Activated CD4-positive, alpha-beta T cell treated with anti-CD3 and anti-CD28 coated beads, Interleukin-2, amount 10 ng/mL, durations not matched to agents 24 days and 14 days (primary cell): ENCODE measurements at regions of chr9 and their contacts with region 1.

Region 1: GRCh38 chr9:27033823-27034403 is 28.4 kb upstream of the LRRC19 start:
- DNase-seq: peak; percentile 83
- H3K4me3 Mint-ChIP-seq: no peak overlapping the region
- H3K27ac Mint-ChIP-seq: no peak overlapping the region
- H3K4me1 Mint-ChIP-seq: no peaks in the 10 kb centered on the region
- H3K27me3 Mint-ChIP-seq: no peaks in the 10 kb centered on the region

Region 2: DNA sequence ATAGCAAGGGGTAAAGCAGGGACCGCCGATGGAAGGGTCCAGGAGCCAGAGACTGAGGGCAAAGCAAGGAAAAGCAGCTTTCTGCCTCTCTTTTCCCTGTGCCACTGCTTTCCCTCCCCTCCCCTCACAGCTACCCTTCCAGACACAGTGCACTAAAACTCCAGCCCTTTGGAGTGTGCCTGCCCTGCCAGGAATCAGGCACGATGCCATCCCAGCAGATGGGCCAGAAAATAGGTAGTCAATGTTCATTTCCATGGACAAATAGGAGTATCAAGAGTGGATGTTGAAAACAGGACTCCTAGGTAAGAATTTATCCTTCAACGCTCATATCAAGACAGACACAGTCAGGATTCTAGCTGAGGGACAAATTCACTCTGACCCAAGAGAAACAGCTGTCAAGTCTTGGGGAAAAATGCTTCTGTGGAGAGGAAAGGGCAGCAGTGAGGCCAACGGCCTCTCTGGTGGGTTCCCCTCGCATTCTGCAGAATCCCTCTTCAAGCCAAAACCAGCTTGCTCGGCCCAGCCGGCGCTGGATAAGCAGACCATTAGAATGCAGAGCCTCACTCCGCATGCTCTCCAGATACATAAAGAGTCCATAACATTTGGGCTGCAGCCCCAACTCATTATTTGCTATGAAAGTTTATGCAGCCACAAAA is 279.3 kb before region 1 on chr9:
- intact Hi-C with region 1: no loop called
- DNase-seq: no peak
- H3K4me3 Mint-ChIP-seq: no peak overlapping the region
- H3K27ac Mint-ChIP-seq: no peak overlapping the region
- H3K4me1 Mint-ChIP-seq: no peaks in the 10 kb centered on the region
- H3K27me3 Mint-ChIP-seq: no peaks in the 10 kb centered on the region

Region 3: GRCh38 chr9:26995815-26996214 is 38.1 kb before region 1 on chr9:
- intact Hi-C with region 1: no loop called
- DNase-seq: no peak
- H3K4me3 Mint-ChIP-seq: no peak overlapping the region
- H3K27ac Mint-ChIP-seq: no peak overlapping the region
- H3K4me1 Mint-ChIP-seq: no peaks in the 10 kb centered on the region
- H3K27me3 Mint-ChIP-seq: no peaks in the 10 kb centered on the region

Region 4: DNA sequence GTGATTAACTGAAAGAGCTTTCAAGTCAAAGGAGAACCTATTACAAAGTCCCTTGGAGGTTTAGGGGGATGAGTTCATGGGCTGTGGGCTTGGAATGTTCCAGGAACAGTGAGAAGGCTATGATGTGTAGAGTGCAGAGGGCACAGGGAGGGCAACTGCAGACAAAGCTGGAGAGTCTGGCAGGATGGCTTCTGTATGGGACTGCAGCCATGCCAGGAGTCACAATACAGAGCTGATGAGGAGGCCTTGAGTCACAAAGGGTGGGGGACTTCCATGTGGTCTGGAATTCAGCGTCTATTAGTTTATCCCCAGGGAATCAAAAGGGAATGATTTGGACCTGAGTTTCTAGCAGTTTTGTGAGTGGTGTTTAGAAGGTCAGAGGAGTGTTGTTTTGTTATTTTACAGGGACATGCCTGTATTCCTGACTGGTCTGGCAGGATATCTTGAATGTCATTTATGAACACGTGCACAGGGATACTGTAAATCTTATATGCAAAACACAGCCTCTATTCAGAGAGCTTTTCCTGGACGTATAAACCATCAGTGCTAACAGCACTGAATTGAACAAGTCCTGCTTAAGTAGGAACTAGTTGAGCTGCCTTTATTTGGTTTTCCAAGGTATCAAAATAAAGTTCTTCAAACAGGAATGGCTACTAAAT is 60.9 kb after region 1 on chr9:
- intact Hi-C with region 1: loop called (anchors 10 kb)
- DNase-seq: no peak
- H3K4me3 Mint-ChIP-seq: no peak overlapping the region
- H3K27ac Mint-ChIP-seq: no peak overlapping the region
- H3K4me1 Mint-ChIP-seq: peaks cover 2% of the 10 kb centered on the region
- H3K27me3 Mint-ChIP-seq: peaks cover 5% of the 10 kb centered on the region

Region 5: GRCh38 chr9:27276193-27277030 is 242.5 kb after region 1 on chr9:
- intact Hi-C with region 1: loop called (anchors 1 kb)
- DNase-seq: peak; percentile 61
- H3K4me3 Mint-ChIP-seq: no peak overlapping the region
- H3K27ac Mint-ChIP-seq: no peak overlapping the region
- H3K4me1 Mint-ChIP-seq: peaks cover 5% of the 10 kb centered on the region
- H3K27me3 Mint-ChIP-seq: peaks cover 6% of the 10 kb centered on the region